IMR-90 (cell line): ENCODE measurements at regions of chr13 and their contacts with region 1.

Region 1: DNA sequence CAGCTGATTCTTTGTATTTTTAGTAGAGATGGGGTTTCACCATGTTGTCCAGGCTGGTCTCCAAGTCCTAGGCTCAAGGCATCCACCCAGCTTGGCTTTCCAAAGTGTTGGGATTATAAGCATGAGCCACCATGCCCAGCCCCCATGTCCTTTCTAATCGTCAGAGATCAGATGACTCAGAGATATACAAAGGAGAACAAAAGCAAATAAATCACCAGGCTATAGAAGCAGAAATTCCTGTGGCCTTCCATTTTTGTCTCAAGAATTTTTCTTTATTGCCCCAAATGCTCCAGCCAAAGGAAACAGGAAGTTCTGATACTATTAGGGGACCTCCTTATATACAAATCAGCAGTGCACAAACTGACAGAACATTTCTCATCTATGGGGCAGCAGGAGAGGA is 207.8 kb downstream of the RFC3 start:
- DNase-seq: peak; percentile 8
- ATAC-seq: no peak
- H3K4me3 ChIP-seq: no peak overlapping the region
- H3K27ac ChIP-seq: no peak overlapping the region
- H3K4me1 ChIP-seq: no peaks in the 10 kb centered on the region
- H3K27me3 ChIP-seq: no peaks in the 10 kb centered on the region
- CTCF ChIP-seq: no peak
- POLR2A ChIP-seq: no peak
- RAD21 ChIP-seq: no peak

Region 2: DNA sequence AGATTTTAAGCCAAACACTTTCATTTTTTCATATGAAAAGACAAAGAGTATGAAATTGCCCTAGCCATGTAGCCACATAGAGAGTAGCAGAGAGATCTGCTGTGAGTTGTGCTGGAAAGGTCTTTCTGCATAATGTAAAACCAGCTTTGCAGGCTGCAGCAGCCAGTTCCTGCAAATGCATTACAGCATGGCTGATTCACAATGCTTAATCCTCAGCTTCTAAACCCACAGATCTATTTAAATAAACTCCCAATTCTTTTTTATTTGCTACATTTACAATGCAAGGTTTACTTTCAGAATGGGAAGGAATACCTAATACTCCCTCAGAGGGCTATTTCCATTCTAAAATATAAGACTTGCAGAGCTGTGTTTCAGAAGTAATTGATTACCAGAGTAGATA is 554.5 kb before region 1 on chr13:
- CTCF ChIA-PET with region 1: no interaction called
- POLR2A ChIA-PET with region 1: no interaction called
- dilution Hi-C with region 1: no loop called
- in situ Hi-C with region 1: no loop called
- intact Hi-C with region 1: no loop called
- DNase-seq: peak; percentile 69
- ATAC-seq: peak; percentile 93
- H3K4me3 ChIP-seq: no peak overlapping the region
- H3K27ac ChIP-seq: no peak overlapping the region
- H3K4me1 ChIP-seq: no peaks in the 10 kb centered on the region
- H3K27me3 ChIP-seq: no peaks in the 10 kb centered on the region
- CTCF ChIP-seq: no peak
- POLR2A ChIP-seq: no peak
- RAD21 ChIP-seq: no peak

Region 3: DNA sequence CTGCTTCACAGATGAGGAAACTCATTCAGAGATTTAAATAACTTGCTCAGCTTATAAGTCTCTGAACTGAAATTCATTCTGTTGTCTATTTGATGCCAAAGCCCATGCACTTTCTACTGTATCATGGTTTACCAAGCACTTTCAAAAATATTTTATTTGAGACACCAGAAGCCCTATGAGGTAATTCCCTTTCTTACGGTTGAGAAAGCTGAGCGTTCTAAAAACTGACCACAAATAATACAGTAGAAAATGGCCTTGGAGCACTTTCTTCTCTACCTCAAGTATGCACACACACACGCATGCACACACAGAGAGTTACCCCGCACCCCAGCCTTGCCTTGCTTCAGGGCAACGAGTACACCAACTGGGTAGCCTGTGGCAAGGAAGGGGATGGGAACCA is 20.7 kb after region 1 on chr13:
- CTCF ChIA-PET with region 1: no interaction called
- POLR2A ChIA-PET with region 1: no interaction called
- dilution Hi-C with region 1: no loop called
- in situ Hi-C with region 1: no loop called
- intact Hi-C with region 1: no loop called
- DNase-seq: no peak
- ATAC-seq: no peak
- H3K4me3 ChIP-seq: no peak overlapping the region
- H3K27ac ChIP-seq: no peak overlapping the region
- H3K4me1 ChIP-seq: peaks cover 2% of the 10 kb centered on the region; the same call in 1 of the 2 replicates
- H3K27me3 ChIP-seq: no peaks in the 10 kb centered on the region
- CTCF ChIP-seq: no peak
- POLR2A ChIP-seq: no peak
- RAD21 ChIP-seq: no peak

Region 4: GRCh38 chr13:34086281-34086680 is 60.5 kb after region 1 on chr13:
- CTCF ChIA-PET with region 1: no interaction called
- POLR2A ChIA-PET with region 1: no interaction called
- dilution Hi-C with region 1: no loop called
- in situ Hi-C with region 1: loop called (anchors 10 kb)
- intact Hi-C with region 1: no loop called
- DNase-seq: no peak
- ATAC-seq: no peak
- H3K4me3 ChIP-seq: no peak overlapping the region
- H3K27ac ChIP-seq: no peak overlapping the region
- H3K4me1 ChIP-seq: no peaks in the 10 kb centered on the region
- H3K27me3 ChIP-seq: no peaks in the 10 kb centered on the region
- CTCF ChIP-seq: no peak
- POLR2A ChIP-seq: no peak
- RAD21 ChIP-seq: no peak